Right ventricle myocardium inferior (tissue), 1 donor: ENCODE measurements at regions of chr1 and their contacts with region 1.

Region 1: DNA sequence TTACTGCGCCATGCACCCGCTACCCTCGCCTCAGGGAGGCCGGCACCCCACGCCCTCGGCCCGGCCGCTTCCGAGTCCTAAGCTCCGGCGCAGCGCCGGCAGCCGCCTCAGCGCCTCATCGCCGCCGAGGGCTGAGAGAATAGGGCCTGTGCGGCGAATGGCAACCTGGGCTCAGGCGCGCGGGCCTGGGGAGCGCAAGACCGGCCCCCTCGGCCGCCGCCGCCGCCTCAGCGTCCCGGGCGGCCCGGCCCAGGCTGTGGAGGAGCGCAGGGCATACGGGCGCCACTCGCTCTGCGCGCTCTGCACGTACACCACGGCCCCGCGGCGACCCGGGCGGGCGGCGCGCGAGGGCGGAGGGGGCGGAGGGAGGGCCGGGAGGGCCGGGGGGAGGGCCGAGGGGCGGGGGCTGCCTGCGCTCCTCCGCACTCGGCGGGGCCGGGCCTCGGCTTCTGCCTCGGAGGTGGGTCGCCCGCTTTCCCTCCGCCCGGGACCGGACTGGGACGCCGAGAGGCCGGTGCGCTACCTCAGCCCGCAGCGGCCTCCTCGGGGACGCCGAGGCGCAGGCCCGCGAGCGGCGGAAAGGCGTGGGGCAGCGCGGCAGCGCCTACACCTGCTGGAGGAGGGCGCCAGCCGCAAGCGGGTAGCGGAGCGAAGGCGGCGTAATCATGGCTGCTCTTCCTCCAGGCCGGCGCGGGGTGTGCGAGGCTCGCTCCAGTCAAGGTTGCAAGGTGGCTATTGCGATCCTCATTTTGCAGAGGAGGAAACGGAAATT is at the start of gene EGLN1:
- DNase-seq: peak; percentile 94
- ATAC-seq: peak; percentile 94
- total RNA-seq, gene EGLN1: 86.0 TPM

Region 2: DNA sequence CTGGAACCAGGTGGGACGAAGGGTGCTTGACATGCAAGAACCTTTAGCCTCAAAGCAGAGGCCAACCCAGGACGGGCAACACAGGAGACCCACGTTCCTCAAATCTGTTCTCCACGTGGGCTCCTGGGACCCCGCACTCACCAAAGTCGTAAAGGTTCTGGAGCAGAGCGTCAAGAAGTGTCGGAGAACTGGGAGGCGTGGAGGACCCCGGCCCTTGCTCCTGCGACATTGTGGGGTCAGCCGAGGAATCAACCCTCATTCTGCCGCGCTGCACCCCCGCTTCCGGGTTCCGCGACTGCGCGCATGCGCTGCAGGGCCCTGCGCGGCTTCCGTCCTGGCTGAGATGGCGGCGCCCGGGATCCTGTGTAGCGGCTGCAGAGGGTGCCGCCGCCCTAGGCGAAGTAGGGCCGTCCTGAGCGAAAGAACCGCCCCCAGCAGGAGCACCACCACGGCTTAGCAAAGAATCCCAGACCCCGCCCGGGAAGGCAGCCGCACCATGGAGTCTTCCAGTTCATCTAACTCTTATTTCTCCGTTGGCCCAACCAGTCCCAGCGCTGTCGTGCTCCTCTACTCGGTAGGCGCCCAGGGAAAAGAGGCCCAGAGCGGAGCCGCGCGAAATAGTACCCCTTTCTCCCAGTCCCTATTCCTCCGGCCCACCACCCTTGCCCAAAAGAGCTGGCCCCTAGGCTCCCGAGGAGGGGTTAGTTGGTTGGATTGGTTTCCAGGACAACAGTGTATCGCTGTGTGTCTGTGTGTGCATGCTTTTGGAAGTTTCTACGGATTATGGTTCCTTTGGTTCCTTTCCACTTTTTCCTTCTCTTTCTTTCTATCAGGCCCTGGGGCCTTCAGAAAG is 181.1 kb before region 1 on chr1 and contains the start of gene GNPAT:
- intact Hi-C with region 1: loop called (anchors 10 kb)
- DNase-seq: peak; percentile 96
- ATAC-seq: peak; percentile 98
- total RNA-seq, gene GNPAT: 59.1 TPM

Region 3: GRCh38 chr1:231357831-231358354 is 64.3 kb before region 1 on chr1:
- intact Hi-C with region 1: loop called (anchors 2 kb)
- DNase-seq: no peak
- ATAC-seq: peak; percentile 72

Region 4: GRCh38 chr1:231442735-231443134 is 20.6 kb after region 1 on chr1:
- intact Hi-C with region 1: no loop called
- DNase-seq: no peak
- ATAC-seq: no peak

Region 5: DNA sequence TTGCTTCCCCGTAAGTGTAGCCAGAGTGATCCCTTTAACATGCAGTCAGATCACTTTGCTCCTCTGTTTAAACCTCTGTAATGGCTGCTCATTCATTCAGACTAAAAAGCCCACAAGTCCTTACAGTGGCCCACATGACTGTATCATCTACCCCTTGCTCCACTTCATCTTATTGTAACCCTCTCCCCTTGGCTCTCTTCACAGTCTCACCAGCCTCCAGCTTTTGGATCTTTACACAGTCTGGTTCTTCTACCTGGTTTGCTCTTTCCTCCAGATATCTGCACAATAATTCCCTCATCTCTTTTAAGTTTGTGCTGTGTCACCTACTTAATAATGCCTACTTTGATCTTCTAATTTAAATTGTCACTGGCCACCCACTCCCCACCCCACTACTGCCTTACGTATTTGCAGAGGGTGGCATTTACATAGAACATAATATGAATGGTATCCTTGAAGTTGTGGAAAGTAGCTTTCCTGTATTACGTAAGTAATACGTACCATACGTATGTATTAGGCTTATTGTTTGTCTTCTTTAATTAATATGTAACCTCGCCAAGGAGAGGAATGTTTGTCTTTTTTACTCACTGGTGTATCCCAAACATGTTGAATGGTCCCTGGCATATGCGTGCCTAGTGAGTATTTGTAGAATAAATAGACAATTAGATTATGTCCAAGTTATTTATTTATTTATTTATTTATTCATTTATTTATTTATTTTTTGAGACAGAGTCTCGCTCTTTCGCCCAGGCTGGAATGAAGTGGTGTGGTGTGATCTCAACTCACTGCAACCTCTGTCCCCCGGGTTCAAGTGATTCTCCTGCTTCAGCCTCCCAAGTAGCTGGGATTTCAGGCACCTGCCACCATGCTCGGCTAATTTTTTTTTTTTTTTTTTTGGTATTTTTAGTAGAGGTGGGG is 154.9 kb after region 1 on chr1:
- intact Hi-C with region 1: no loop called
- DNase-seq: no peak
- ATAC-seq: no peak

Region 6: DNA sequence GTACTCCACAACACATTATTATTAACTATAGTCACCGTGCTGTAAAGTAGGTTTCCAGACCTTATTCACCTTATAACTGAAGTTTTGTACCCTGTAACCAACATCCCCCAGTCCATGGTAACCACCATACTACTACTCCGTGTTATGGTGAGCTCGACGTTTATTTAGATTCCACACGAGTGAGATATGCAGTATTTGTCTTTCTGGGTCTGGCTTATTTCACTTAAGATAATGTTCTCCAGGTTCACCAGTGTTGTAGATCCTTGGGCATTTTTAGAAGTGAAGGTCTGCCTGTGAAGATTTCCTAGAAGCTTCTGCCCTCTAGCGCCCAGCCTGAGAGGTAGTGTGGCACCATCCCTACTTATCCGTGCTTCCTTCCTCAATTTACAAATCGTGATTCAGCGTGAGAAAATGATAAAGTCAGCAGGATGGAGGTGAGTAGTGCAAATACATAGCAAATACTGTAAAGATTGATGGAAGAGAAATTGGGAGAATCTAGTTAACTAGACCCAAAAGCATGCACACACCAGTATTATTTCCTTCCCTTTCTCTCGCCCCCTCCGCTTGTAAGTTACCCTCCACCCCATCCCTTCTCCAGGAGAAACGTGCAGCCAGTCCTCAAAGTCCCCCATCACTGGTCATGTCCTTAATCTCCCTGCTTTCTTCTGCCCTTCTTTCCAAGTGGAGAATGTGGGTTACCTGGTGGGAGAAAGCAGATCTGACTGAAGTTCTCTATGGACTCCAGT is 168.4 kb after region 1 on chr1:
- intact Hi-C with region 1: loop called (anchors 10 kb)
- DNase-seq: no peak
- ATAC-seq: peak; percentile 81